ENCODE measurements at regions of chr9 and their contacts with region 1.

Region 1: GRCh38 chr9:98775831-98776441 is 20.4 kb downstream of the ANKS6 start:
- DNase-seq: no peak
- H3K4me3 ChIP-seq: no peak overlapping the region
- H3K27ac ChIP-seq: no peak overlapping the region
- H3K4me1 ChIP-seq: no peaks in the 10 kb centered on the region
- H3K27me3 ChIP-seq: no peaks in the 10 kb centered on the region
- CTCF ChIP-seq: peak; percentile 32 to 56 (median 50)
- EP300 ChIP-seq: no peak
- POLR2A ChIP-seq: no peak

Region 2: GRCh38 chr9:98326459-98327248 is 449.3 kb before region 1 on chr9:
- in situ Hi-C with region 1: loop called in 2 of 4 experiments (anchors 10 to 25 kb)
- intact Hi-C with region 1: no loop called
- DNase-seq: no peak
- H3K4me3 ChIP-seq: no peak overlapping the region
- H3K27ac ChIP-seq: no peak overlapping the region
- H3K4me1 ChIP-seq: no peaks in the 10 kb centered on the region
- H3K27me3 ChIP-seq: no peaks in the 10 kb centered on the region
- CTCF ChIP-seq: no peak
- EP300 ChIP-seq: no peak
- POLR2A ChIP-seq: no peak

Region 3: GRCh38 chr9:98958271-98958984 is 182.5 kb after region 1 on chr9:
- in situ Hi-C with region 1: no loop called
- intact Hi-C with region 1: no loop called
- DNase-seq: no peak
- H3K4me3 ChIP-seq: no peak overlapping the region
- H3K27ac ChIP-seq: peak overlapping the region; percentile 74 to 87 (median 81)
- H3K4me1 ChIP-seq: peaks cover 0 to 45% (median 19%) of the 10 kb centered on the region in 4 donors
- H3K27me3 ChIP-seq: no peaks in the 10 kb centered on the region
- CTCF ChIP-seq: no peak
- EP300 ChIP-seq: no peak
- POLR2A ChIP-seq: no peak